ENCODE measurements at regions of chr1 and their contacts with region 1.

Region 1: DNA sequence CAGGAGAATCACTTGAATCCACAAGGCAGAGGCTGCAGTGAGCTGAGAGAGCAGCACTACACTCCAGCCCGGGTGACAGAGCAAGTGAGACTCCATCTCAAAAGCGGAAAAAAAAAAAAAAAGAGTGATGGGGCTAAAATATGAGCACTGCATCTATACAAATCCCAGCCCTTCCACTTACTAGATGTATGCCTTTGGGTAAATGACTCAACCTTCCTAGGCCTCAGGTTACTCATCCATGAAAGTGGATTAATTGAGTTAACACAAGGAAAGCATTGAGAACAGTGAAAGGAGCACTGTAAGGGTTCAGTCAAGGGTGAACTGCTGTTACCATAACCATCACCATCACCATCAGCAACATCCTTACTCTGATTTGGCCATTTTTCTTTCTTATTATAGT is 226.4 kb upstream of the C8B start:
- DNase-seq: peak in 1 of 2 experiments; percentile 40
- H3K4me3 ChIP-seq: no peak overlapping the region
- H3K27ac ChIP-seq: no peak overlapping the region
- H3K4me1 ChIP-seq: no peaks in the 10 kb centered on the region
- H3K27me3 ChIP-seq: peaks cover 9% of the 10 kb centered on the region; the same call in 1 of the 2 replicates
- CTCF ChIP-seq: no peak

Region 2: GRCh38 chr1:57637155-57637554 is 444.9 kb after region 1 on chr1:
- CTCF ChIA-PET with region 1: interaction called, 13 read pairs
- POLR2A ChIA-PET with region 1: no interaction called
- intact Hi-C with region 1: no loop called
- DNase-seq: no peak
- H3K4me3 ChIP-seq: no peak overlapping the region
- H3K27ac ChIP-seq: no peak overlapping the region
- H3K4me1 ChIP-seq: no peaks in the 10 kb centered on the region
- H3K27me3 ChIP-seq: peaks cover 6% of the 10 kb centered on the region; the same call in 1 of the 2 replicates
- CTCF ChIP-seq: no peak